Left ventricle myocardium inferior (tissue), 1 donor: ENCODE measurements at regions of chr15 and their contacts with region 1.

Region 1: GRCh38 chr15:43285609-43286037 is 18.9 kb upstream of the TGM5 start:
- DNase-seq: no peak
- H3K4me3 ChIP-seq: no peak overlapping the region
- H3K27ac ChIP-seq: no peak overlapping the region
- H3K4me1 ChIP-seq: no peaks in the 10 kb centered on the region
- H3K27me3 ChIP-seq: no peaks in the 10 kb centered on the region
- CTCF ChIP-seq: peak; percentile 85

Region 2: DNA sequence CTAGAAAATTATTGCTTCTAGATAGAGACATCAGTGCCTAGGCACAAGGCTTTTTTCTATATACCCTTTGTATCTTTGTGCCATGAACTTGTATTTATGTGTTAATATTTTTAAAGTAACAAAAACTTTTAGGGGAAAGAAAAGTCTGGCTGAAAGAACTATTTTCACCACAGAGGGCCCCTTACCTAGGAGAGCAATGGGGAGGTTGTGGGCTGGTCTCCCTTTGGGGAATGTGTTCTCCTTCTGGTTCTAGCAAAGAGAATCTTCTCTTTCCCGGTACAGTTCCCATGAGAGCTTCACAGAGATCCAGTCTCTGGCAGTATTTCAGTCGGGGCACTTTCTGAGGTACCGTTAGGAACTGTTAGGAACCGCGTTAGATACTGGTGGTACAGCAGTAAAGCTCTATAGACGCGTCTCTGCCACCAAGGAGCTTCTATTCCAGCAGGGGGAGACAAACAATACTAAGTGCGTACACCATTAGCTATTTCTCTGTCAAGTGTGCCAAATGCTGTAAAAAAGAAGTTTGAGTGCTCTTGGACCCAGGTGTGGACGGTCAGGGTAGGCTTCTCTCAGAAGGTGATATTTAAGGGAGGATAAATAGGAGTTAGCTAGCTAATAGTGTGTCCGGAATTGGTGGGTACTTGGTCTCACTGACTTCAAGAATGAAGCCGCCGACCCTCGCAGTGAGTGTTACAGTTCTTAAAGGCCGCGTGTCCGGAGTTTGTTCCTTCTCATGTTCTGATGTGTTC is 60.2 kb before region 1 on chr15:
- intact Hi-C with region 1: loop called (anchors 2 kb)
- DNase-seq: no peak
- H3K4me3 ChIP-seq: no peak overlapping the region
- H3K27ac ChIP-seq: no peak overlapping the region
- H3K4me1 ChIP-seq: peaks cover 12% of the 10 kb centered on the region
- H3K27me3 ChIP-seq: no peaks in the 10 kb centered on the region
- CTCF ChIP-seq: peak; percentile 77